Dendritic cell treated with granulocyte-macrophage colony-stimulating factor and Interleukin-4, amounts not matched to agents 40 ng/mL and 50 ng/mL, for 4 days (primary cell): ENCODE measurements at regions of chr12 and their contacts with region 1.

Region 1: DNA sequence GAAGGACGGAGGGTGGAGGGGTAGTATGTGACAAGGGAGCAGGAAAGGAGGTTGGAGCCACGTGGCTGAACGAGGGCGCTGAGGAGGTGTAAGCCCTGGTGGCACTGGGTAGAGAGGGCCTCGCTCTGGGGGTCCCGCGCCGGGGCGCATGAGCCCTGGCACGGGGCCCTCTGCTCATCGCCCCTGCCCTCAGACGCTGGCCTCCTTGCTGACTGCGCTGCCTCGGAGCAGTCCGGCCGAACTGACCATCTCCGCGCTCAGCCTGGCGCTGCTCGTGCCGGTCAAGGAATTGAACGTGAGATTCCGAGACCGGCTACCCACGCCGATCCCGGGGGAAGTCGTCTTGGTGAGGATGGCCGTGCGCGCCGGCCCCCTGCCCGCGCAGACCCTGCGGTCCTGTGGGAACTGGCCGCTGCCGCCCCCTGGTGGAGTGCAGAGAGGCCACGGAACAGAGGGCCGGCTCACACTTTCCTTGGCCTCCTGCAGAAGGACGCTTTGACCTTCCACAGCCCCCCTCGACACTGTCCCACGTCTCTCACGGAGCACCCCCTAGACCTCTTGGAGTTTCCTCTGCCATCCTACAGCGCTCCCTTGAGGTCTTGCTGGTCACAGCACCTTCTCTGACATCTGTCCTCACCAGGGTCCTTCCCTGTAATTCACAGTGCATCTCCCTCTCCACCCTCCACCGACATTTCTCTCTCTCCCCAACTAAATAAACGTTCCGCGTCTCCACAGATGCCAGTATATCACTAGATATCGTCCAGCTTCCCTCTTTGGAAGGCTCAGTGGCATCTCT is 10.5 kb downstream of the ARHGEF25 start:
- H3K4me3 Mint-ChIP-seq: peak overlapping the region; percentile 73
- H3K27ac Mint-ChIP-seq: no peak overlapping the region
- H3K4me1 Mint-ChIP-seq: peaks cover 49% of the 10 kb centered on the region
- H3K27me3 Mint-ChIP-seq: peaks cover 97% of the 10 kb centered on the region

Region 2: DNA sequence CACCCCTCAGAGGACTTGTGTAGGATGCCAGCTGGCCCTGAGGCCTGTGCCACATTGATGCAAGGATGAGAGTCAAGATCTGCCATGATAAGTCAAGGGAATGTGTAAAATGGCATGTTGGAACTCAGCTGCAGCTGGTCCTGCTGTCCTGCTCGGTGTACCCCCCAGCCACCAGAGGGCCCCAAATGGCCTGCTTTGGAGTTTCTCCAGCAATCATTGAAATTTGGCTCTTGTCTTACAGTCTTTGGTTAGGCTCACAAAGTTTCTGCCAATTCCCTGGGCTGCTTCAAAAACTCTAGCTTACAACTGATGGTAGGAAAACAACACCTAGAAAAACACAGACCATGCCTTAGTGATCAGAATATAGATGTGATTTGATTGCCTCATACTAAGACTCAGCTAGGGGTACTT is 781.8 kb before region 1 on chr12:
- intact Hi-C with region 1: no loop called
- H3K4me3 Mint-ChIP-seq: no peak overlapping the region
- H3K27ac Mint-ChIP-seq: no peak overlapping the region
- H3K4me1 Mint-ChIP-seq: peaks cover 12% of the 10 kb centered on the region
- H3K27me3 Mint-ChIP-seq: peaks cover 19% of the 10 kb centered on the region

Region 3: DNA sequence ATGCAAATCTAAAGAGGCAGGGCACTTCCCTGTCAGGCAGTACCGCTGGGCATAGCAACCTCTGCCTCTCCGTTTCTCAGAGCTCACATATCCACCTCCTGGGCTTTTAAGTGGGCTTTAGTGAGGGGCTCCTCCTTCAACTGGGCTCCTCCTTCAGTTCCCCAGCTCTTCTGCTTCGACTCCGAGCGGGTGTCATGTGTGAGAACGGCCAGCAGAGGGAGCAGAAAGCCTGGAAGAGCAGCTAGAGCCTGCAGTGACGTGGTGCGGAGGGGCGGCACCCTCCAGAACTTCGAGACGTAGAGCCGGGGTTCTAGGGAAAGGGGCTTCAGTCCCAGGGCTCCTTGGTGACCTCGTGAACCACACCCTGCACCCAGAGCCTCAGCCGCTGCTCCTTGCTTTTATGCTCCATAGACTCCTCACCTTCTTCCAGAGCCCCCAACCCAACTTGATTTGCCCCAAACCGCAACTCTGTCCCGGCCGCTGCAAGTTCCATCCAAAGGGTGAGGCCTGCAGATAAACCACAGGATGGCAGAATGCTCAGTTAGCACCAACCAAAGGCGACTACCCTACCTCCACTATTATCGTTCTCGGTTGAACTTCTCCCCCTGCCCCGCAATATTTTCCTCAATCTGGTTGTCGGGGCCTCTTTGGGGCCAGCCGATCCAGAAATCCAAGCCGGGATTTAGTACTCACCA is 162.5 kb before region 1 on chr12:
- intact Hi-C with region 1: loop called (anchors 2 kb)
- H3K4me3 Mint-ChIP-seq: peak overlapping the region; percentile 87
- H3K27ac Mint-ChIP-seq: peak overlapping the region; percentile 95
- H3K4me1 Mint-ChIP-seq: peaks cover 64% of the 10 kb centered on the region
- H3K27me3 Mint-ChIP-seq: peaks cover 38% of the 10 kb centered on the region

Region 4: GRCh38 chr12:57632694-57633477 is 11.2 kb after region 1 on chr12 and contains the start of gene B4GALNT1:
- intact Hi-C with region 1: no loop called
- H3K4me3 Mint-ChIP-seq: peak within 1 kb of the TSS; percentile 68
- H3K27ac Mint-ChIP-seq: no peak within 1 kb of the TSS
- H3K4me1 Mint-ChIP-seq: peaks cover 20% of the 10 kb centered on the region
- H3K27me3 Mint-ChIP-seq: peaks cover 73% of the 10 kb centered on the region